Activated B cell treated with CpG ODN at 0.5 μM for 24 hours (primary cell): ENCODE measurements at regions of chr7 and their contacts with region 1.

Region 1: GRCh38 chr7:5237286-5237685 is 45.5 kb upstream of the SLC29A4 start:
- DNase-seq: no peak
- ATAC-seq: no peak
- H3K4me3 Mint-ChIP-seq: peak overlapping the region; percentile 60
- H3K27ac Mint-ChIP-seq: no peak overlapping the region
- H3K4me1 Mint-ChIP-seq: peaks cover 62% of the 10 kb centered on the region
- H3K27me3 Mint-ChIP-seq: peaks cover 2% of the 10 kb centered on the region
- CTCF ChIP-seq: no peak

Region 2: DNA sequence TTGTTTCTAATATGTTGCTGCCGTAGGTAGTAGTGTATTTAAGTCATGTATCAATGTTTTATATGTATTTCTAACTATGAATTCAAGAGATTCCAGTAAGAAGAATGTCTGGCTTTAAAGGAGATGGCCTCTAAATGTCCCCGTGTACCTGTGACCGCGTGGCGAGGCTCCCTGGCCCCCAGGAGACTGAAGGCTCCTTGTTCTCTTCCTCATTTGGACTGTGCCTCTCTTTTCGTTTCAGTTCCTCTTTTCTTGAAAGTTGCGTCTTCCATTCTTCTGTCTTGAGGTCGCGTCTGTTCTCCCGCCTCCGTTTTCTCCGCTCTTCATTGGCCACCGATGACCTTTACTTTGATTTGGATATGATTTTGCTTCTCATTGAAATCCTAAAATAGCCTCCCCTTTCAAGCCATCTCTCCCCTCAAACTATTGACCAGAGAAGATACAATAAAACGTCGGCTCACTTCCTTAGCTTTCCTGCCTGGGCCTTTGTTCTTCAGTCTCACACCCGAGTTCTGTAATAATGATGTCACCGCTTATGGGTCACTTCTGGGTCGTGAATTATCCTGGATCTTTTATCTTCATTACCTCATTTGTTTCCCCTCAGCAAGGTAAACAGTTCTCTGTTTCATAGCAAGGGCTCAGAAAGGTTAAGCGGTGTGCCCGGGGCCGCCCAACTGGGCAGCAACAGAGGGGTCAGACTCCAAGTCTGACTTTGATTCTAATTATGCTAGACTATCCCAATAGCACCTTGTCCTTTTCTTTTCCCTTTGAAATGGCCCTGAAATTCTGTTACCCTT is 18.5 kb before region 1 on chr7:
- CTCF ChIA-PET with region 1: interaction called, 11 read pairs
- POLR2A ChIA-PET with region 1: interaction called, 158 read pairs
- intact Hi-C with region 1: loop called (anchors 1 kb)
- DNase-seq: peak; percentile 52
- ATAC-seq: peak; percentile 89
- H3K4me3 Mint-ChIP-seq: peak overlapping the region; percentile 64
- H3K27ac Mint-ChIP-seq: peak overlapping the region; percentile 92
- H3K4me1 Mint-ChIP-seq: peaks cover 38% of the 10 kb centered on the region
- H3K27me3 Mint-ChIP-seq: no peaks in the 10 kb centered on the region
- CTCF ChIP-seq: no peak

Region 3: DNA sequence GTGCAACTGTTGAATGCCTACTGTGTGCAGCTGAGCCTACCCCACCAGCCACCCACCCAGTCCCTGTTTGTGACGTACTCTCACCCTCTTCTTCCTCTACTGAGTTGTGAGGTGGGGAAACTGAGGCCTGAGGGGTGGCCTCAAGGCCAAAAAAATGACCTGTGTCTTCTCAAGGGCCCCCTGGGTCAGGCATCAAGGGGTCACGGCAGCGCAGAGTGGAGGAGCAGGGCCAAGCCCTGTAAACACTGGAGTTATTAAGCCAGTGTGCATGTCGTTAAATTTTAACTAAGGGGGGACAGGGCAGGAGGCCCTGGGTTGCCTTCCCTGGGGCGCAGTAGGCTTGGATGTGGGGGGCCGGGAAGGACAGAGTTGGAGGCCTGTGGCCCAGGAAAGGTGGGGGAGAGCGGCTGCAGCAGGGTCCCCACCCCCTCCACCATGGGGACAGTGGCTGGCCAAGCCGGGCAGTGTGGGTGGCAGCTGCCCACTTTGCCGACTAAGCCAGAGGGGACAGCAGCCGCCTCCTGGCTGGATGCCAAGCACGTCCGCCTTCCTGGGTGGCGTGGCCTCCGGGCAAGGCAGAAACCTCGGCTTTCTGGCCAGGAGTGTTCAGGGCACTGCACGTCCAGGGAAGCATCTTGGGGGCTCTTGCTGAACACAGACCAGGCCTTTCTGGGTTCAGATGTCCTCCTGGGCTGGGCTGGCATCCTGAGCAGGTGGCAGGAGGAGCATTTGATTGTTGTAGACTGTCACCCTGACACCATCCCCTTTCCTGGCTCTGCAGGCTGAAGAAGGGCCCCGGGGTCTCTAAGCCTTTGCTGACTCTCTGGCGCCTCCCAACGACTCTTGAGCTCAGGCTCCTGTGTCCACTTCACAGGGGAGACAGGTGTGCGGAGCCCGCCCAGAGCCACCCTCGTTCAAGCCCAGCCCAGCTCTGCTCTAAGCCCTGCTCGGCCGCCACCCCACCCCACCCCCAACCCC is 47.3 kb after region 1 on chr7:
- CTCF ChIA-PET with region 1: interaction called, 3 read pairs
- POLR2A ChIA-PET with region 1: no interaction called
- intact Hi-C with region 1: loop called (anchors 2 kb)
- DNase-seq: no peak
- ATAC-seq: peak; percentile 26
- H3K4me3 Mint-ChIP-seq: peak overlapping the region; percentile 41
- H3K27ac Mint-ChIP-seq: no peak overlapping the region
- H3K4me1 Mint-ChIP-seq: no peaks in the 10 kb centered on the region
- H3K27me3 Mint-ChIP-seq: peaks cover 6% of the 10 kb centered on the region
- CTCF ChIP-seq: no peak

Region 4: DNA sequence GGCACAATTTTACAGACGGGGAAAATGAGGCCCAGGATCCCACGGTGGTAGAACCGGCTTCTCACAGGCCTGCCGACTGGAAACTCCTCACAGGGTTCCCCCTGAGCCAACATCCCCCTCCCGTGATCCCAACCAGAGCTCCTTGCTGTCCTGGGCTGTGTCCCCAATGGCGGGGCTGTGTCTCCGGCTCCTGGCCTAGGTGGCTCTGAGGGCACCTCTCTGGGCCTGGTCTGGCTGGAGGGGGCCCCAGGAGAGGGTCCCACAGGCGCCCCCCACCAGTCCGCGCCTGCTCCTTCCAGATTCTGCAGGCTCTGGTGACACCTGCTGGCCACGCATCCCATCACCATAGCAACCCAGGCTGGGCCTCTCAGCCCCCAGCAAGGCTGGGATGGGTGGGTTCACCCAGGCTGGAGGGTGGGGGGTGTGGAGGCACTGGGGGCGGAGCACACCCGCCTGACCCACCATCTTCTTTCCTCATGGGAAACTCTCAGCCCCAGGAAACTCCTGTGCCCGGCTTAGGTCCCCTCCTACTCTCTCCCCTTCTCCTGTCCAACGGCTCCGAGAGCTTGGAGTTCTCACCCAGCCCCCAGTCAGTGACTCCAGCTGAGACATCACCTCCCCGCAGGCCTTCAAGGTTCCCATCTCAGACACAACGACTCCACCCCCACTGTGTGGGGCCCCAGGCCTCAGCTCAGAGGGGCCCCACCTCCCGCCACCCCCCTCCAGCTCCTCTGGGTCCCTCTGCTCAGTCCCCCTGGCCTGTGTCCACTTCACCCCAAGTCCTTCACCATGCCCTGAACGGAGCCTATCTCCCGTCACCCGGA is 213.5 kb after region 1 on chr7:
- CTCF ChIA-PET with region 1: interaction called, 28 read pairs
- POLR2A ChIA-PET with region 1: interaction called, 3 read pairs
- intact Hi-C with region 1: loop called (anchors 1 kb)
- DNase-seq: peak; percentile 31
- ATAC-seq: peak; percentile 75
- H3K4me3 Mint-ChIP-seq: no peak overlapping the region
- H3K27ac Mint-ChIP-seq: no peak overlapping the region
- H3K4me1 Mint-ChIP-seq: peaks cover 1% of the 10 kb centered on the region
- H3K27me3 Mint-ChIP-seq: peaks cover 2% of the 10 kb centered on the region
- CTCF ChIP-seq: no peak

Region 5: GRCh38 chr7:5780801-5781496 is 543.7 kb after region 1 on chr7:
- CTCF ChIA-PET with region 1: no interaction called
- POLR2A ChIA-PET with region 1: no interaction called
- intact Hi-C with region 1: no loop called
- DNase-seq: no peak
- ATAC-seq: peak; percentile 40
- H3K4me3 Mint-ChIP-seq: peak overlapping the region; percentile 88
- H3K27ac Mint-ChIP-seq: peak overlapping the region; percentile 80
- H3K4me1 Mint-ChIP-seq: peaks cover 41% of the 10 kb centered on the region
- H3K27me3 Mint-ChIP-seq: no peaks in the 10 kb centered on the region
- CTCF ChIP-seq: no peak